ENCODE measurements at regions of chr4 and their contacts with region 1.

Region 1: GRCh38 chr4:86927843-86928395 is 6.9 kb upstream of the AFF1 start:
- DNase-seq: no peak
- H3K4me3 ChIP-seq: no peak overlapping the region
- H3K4me3 Mint-ChIP-seq: no peak overlapping the region
- H3K27ac ChIP-seq: no peak overlapping the region
- H3K27ac Mint-ChIP-seq: peak overlapping the region in 2 of 7 donors; percentile 10 to 19
- H3K4me1 ChIP-seq: no peaks in the 10 kb centered on the region
- H3K4me1 Mint-ChIP-seq: peaks cover 0 to 2% (median under 1%) of the 10 kb centered on the region in 4 donors
- H3K27me3 ChIP-seq: no peaks in the 10 kb centered on the region
- H3K27me3 Mint-ChIP-seq: no peaks in the 10 kb centered on the region

Region 2: GRCh38 chr4:86816501-86817273 is 111.2 kb before region 1 on chr4:
- CTCF ChIA-PET with region 1: no interaction called
- POLR2A ChIA-PET with region 1: no interaction called
- intact Hi-C with region 1: no loop called
- DNase-seq: no peak
- H3K4me3 ChIP-seq: no peak overlapping the region
- H3K4me3 Mint-ChIP-seq: no peak overlapping the region
- H3K27ac ChIP-seq: no peak overlapping the region
- H3K27ac Mint-ChIP-seq: peak overlapping the region in 1 of 7 donors; percentile 73
- H3K4me1 ChIP-seq: no peaks in the 10 kb centered on the region
- H3K4me1 Mint-ChIP-seq: no peaks in the 10 kb centered on the region
- H3K27me3 ChIP-seq: no peaks in the 10 kb centered on the region
- H3K27me3 Mint-ChIP-seq: peaks cover 1% of the 10 kb centered on the region in 2 donors

Region 3: DNA sequence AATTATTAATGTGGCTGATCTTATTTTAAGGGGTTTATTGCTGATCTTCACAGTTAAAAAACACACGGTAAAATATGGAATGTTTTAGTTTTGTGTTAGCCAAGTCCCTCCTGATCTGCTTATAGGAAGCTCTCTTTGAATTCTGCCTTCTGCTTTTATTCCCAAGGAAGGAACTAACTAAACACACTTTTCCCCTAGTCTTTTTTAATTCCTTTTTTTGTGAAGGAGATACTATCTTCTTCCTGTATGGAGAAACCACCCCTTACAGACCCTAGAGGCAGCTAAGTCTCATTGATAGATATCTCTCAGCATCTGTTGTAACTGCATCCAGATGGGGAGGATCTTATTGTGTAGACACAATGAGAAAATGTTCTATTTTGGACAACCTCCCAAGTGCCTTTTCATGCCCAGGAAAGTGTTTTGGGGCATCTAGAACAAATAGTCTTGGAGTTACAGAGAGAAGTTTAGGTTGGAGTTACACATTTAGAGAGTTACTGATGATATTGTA is 71.3 kb after region 1 on chr4:
- CTCF ChIA-PET with region 1: interaction called, 53 read pairs
- POLR2A ChIA-PET with region 1: interaction called, 376 read pairs
- intact Hi-C with region 1: no loop called
- DNase-seq: no peak
- H3K4me3 ChIP-seq: no peak overlapping the region
- H3K4me3 Mint-ChIP-seq: peak overlapping the region in 3 of 8 donors; percentile 38 to 57 (median 45)
- H3K27ac ChIP-seq: peak overlapping the region; percentile 1
- H3K27ac Mint-ChIP-seq: peak overlapping the region; percentile 25 to 72 (median 62)
- H3K4me1 ChIP-seq: peaks cover 27% of the 10 kb centered on the region
- H3K4me1 Mint-ChIP-seq: peaks cover 31 to 48% (median 42%) of the 10 kb centered on the region in 4 donors
- H3K27me3 ChIP-seq: no peaks in the 10 kb centered on the region
- H3K27me3 Mint-ChIP-seq: no peaks in the 10 kb centered on the region

Region 4: GRCh38 chr4:88411473-88412096 is 1483.7 kb after region 1 on chr4:
- CTCF ChIA-PET with region 1: no interaction called
- POLR2A ChIA-PET with region 1: no interaction called
- intact Hi-C with region 1: no loop called
- DNase-seq: no peak
- H3K4me3 ChIP-seq: no peak overlapping the region
- H3K4me3 Mint-ChIP-seq: no peak overlapping the region
- H3K27ac ChIP-seq: no peak overlapping the region
- H3K27ac Mint-ChIP-seq: peak overlapping the region in 3 of 7 donors; percentile 42 to 57 (median 49)
- H3K4me1 ChIP-seq: no peaks in the 10 kb centered on the region
- H3K4me1 Mint-ChIP-seq: peaks cover 0 to 4% (median 2%) of the 10 kb centered on the region in 4 donors
- H3K27me3 ChIP-seq: no peaks in the 10 kb centered on the region
- H3K27me3 Mint-ChIP-seq: no peaks in the 10 kb centered on the region